ENCODE measurements at regions of chr9 and their contacts with region 1.

Region 1: GRCh38 chr9:33415501-33416038 is 13.2 kb upstream of the AQP7 start:
- DNase-seq: peak; percentile 84 to 98 (median 95)
- ATAC-seq: peak; percentile 83 to 94 (median 85)
- H3K4me3 ChIP-seq: peak overlapping the region; percentile 10 to 35
- H3K4me3 Mint-ChIP-seq: peak overlapping the region; percentile 63 to 70 (median 70)
- H3K27ac ChIP-seq: peak overlapping the region; percentile 83
- H3K27ac Mint-ChIP-seq: peak overlapping the region; percentile 99 to 100
- H3K4me1 ChIP-seq: peaks cover 30 to 55% of the 10 kb centered on the region in 2 experiments
- H3K4me1 Mint-ChIP-seq: peaks cover 54 to 59% (median 55%) of the 10 kb centered on the region in 3 donors
- H3K27me3 ChIP-seq: no peaks in the 10 kb centered on the region
- H3K27me3 Mint-ChIP-seq: no peaks in the 10 kb centered on the region

Region 2: GRCh38 chr9:33446946-33447798 is 31.6 kb after region 1 on chr9 and contains the start of gene AQP3:
- CTCF ChIA-PET with region 1: interaction called, 12 to 27 read pairs
- POLR2A ChIA-PET with region 1: interaction called, 3 to 4 read pairs
- DNase-seq: peak; percentile 36 to 85 (median 68)
- ATAC-seq: peak; percentile 67 to 74 (median 73)
- H3K4me3 ChIP-seq: peak within 1 kb of the TSS; percentile 77 to 83
- H3K4me3 Mint-ChIP-seq: peak within 1 kb of the TSS; percentile 94 to 98 (median 94)
- H3K27ac ChIP-seq: peak within 1 kb of the TSS; percentile 71
- H3K27ac Mint-ChIP-seq: peak within 1 kb of the TSS; percentile 95 to 98
- H3K4me1 ChIP-seq: peaks cover 19 to 67% of the 10 kb centered on the region in 2 experiments
- H3K4me1 Mint-ChIP-seq: peaks cover 50 to 64% (median 64%) of the 10 kb centered on the region in 3 donors
- H3K27me3 ChIP-seq: no peaks in the 10 kb centered on the region
- H3K27me3 Mint-ChIP-seq: no peaks in the 10 kb centered on the region
- total RNA-seq, gene AQP3: 85.7 to 130 (median 111) TPM

Region 3: DNA sequence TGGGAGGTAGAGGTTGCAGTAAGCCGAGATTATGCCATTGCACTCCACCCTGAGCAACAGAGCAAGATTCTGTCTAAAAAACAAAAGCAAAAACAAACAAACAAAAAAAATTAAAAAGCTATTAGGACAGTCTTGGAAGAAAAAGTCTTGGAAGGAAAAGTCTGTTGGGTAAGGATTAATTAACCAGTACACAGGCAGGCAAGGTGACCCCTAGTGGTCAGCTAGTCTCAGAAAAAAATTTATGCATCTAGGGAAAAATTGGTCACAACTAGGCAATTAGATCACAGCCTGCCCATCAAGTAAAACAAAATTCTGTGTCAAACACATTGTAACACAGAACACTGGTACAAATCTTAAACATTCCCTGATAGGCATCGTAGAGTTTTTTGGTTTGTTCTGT is 101.8 kb after region 1 on chr9:
- CTCF ChIA-PET with region 1: no interaction called
- POLR2A ChIA-PET with region 1: no interaction called
- DNase-seq: peak in 1 of 35 experiments; percentile 39
- ATAC-seq: no peak
- H3K4me3 ChIP-seq: no peak overlapping the region
- H3K4me3 Mint-ChIP-seq: no peak overlapping the region
- H3K27ac ChIP-seq: no peak overlapping the region
- H3K27ac Mint-ChIP-seq: no peak overlapping the region
- H3K4me1 ChIP-seq: no peaks in the 10 kb centered on the region
- H3K4me1 Mint-ChIP-seq: no peaks in the 10 kb centered on the region
- H3K27me3 ChIP-seq: peaks cover 0 to 3% of the 10 kb centered on the region in 2 experiments
- H3K27me3 Mint-ChIP-seq: peaks cover 6 to 19% of the 10 kb centered on the region in 2 donors